Activated naive CD4-positive, alpha-beta T cell treated with anti-CD3 and anti-CD28 coated beads, Interleukin-2, amount 10 ng/mL, durations not matched to agents 7 days and 5 days (primary cell): ENCODE measurements at regions of chr7 and their contacts with region 1.

Region 1: DNA sequence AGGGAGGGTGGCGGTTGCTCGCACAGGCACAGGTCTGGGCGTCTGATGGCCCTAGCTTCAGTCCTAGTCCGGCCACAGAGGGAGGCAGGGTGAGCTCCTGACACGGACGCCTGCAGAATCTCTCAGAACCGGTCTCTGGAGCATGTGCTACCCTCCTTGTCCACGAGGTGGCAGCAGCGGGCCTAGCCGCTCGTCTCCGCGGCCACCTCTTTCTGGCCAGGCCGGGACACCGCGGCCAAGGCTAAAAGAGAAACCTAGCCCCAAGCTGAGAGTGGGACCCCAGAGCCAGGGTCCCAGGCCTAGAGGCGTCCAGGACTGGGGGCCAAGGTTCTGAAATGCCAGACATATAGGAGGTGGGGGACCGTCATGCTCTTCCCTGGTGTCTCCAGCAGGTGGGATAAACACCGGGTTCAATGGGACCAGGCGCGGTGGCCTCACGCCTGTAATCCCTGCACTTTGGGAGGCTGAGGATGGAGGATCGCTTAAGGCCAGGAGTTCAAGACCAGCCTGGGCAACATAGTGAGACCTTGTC is 3.2 kb upstream of the LAT2 start:
- DNase-seq: peak; percentile 86
- H3K4me3 Mint-ChIP-seq: no peak overlapping the region
- H3K27ac Mint-ChIP-seq: peak overlapping the region; percentile 62
- H3K4me1 Mint-ChIP-seq: peaks cover 40% of the 10 kb centered on the region
- H3K27me3 Mint-ChIP-seq: peaks cover 23% of the 10 kb centered on the region

Region 2: GRCh38 chr7:74033372-74034311 is 173.0 kb before region 1 on chr7:
- CTCF ChIA-PET with region 1: no interaction called
- DNase-seq: no peak
- H3K4me3 Mint-ChIP-seq: no peak overlapping the region
- H3K27ac Mint-ChIP-seq: no peak overlapping the region
- H3K4me1 Mint-ChIP-seq: peaks cover 3% of the 10 kb centered on the region
- H3K27me3 Mint-ChIP-seq: peaks cover 49% of the 10 kb centered on the region

Region 3: GRCh38 chr7:74068393-74069085 is 138.1 kb before region 1 on chr7:
- CTCF ChIA-PET with region 1: interaction called, 65 read pairs
- DNase-seq: no peak
- H3K4me3 Mint-ChIP-seq: no peak overlapping the region
- H3K27ac Mint-ChIP-seq: no peak overlapping the region
- H3K4me1 Mint-ChIP-seq: peaks cover 2% of the 10 kb centered on the region
- H3K27me3 Mint-ChIP-seq: peaks cover 5% of the 10 kb centered on the region

Region 4: GRCh38 chr7:74183613-74184450 is 22.8 kb before region 1 on chr7:
- CTCF ChIA-PET with region 1: interaction called, 14 read pairs
- DNase-seq: peak; percentile 31
- H3K4me3 Mint-ChIP-seq: no peak overlapping the region
- H3K27ac Mint-ChIP-seq: peak overlapping the region; percentile 33
- H3K4me1 Mint-ChIP-seq: peaks cover 60% of the 10 kb centered on the region
- H3K27me3 Mint-ChIP-seq: no peaks in the 10 kb centered on the region

Region 5: DNA sequence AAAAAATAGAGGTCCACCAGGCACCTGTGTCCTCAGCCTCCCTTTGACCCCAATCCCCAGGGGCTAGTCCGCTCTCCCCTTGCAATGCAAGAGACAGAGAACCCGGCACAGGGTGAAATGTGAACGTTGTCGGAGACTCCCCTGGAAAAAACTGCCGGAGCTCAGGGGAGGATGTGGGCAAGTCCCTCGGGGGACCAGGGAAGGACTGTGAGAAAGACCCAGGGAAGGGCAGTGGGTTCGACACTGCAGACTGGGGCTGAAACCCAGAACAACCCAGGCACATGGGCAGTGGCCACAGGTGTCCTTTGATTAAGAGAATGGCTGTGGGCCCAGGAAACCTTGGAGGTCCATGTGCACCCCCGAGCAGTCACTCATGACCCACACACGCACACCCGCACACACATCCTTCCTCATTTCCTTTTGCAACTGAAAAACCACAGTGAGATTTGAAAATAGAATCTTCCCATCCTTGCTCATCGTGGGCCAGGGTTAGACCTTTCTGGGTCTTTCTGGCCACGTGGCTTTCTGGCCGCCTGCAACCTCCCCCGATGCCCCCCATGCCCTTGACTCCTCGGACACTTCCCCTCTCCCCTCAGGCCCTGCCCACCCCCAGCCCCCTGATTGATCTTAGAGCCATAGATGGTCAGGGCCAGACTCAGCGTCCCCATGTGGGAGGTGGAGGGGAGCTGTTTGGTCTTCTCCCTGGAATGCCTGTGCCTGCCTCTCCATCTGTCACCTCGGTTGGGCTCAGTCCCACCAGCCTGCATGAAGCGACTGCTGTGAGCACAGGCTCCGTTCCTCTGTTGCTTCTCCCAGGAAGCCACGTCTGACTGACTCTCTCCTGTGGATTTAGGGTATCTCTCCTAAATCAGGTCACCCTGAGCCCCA is 11.0 kb after region 1 on chr7:
- CTCF ChIA-PET with region 1: interaction called, 25 read pairs
- DNase-seq: peak; percentile 53
- H3K4me3 Mint-ChIP-seq: peak overlapping the region; percentile 37
- H3K27ac Mint-ChIP-seq: peak overlapping the region; percentile 86
- H3K4me1 Mint-ChIP-seq: peaks cover 30% of the 10 kb centered on the region
- H3K27me3 Mint-ChIP-seq: peaks cover 4% of the 10 kb centered on the region

Region 6: DNA sequence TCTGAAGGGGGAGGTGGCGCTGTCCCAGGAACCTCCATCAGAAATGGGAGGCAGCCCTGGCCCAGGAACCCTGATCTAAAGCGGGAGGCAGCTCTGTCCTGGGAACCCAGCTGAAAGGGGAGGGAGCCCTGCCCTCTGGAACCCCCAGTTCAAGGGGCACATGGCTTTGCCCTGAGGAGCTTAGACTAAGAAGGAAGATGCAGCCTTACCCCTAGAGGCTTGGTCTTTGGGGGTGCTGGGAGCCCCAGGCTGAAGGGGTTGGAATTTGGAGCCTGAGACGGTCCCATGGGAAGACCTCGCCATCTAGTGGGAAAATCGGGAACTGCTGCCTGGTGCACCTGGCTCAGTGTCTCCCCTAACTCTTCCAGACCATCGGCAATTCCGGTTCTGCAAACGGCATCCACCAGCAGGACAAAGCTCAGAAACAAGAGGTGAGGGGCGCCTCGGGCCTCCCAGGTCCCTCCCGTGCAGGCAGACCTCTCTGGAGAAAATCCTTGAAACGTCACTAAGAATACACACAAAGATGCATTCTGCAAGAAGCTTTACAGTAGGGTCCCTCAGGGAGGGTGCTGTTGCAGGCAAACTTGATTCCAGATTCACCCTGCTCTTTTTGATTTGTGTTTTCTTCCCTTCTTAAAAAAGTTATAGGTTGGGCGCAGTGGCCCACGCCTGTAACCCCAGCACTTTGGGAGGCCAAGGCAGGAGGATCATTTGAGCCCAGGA is 194.6 kb after region 1 on chr7:
- CTCF ChIA-PET with region 1: interaction called, 145 read pairs
- DNase-seq: peak; percentile 83
- H3K4me3 Mint-ChIP-seq: no peak overlapping the region
- H3K27ac Mint-ChIP-seq: no peak overlapping the region
- H3K4me1 Mint-ChIP-seq: no peaks in the 10 kb centered on the region
- H3K27me3 Mint-ChIP-seq: no peaks in the 10 kb centered on the region